Activated CD4-positive, alpha-beta memory T cell treated with anti-CD3 and anti-CD28 coated beads for 36 hours (primary cell): ENCODE measurements at regions of chr6 and their contacts with region 1.

Region 1: GRCh38 chr6:53464921-53465460 is 79.9 kb downstream of the GCLC start:
- DNase-seq: no peak
- H3K4me3 Mint-ChIP-seq: no peak overlapping the region
- H3K27ac Mint-ChIP-seq: no peak overlapping the region
- H3K4me1 Mint-ChIP-seq: no peaks in the 10 kb centered on the region
- H3K27me3 Mint-ChIP-seq: no peaks in the 10 kb centered on the region

Region 2: DNA sequence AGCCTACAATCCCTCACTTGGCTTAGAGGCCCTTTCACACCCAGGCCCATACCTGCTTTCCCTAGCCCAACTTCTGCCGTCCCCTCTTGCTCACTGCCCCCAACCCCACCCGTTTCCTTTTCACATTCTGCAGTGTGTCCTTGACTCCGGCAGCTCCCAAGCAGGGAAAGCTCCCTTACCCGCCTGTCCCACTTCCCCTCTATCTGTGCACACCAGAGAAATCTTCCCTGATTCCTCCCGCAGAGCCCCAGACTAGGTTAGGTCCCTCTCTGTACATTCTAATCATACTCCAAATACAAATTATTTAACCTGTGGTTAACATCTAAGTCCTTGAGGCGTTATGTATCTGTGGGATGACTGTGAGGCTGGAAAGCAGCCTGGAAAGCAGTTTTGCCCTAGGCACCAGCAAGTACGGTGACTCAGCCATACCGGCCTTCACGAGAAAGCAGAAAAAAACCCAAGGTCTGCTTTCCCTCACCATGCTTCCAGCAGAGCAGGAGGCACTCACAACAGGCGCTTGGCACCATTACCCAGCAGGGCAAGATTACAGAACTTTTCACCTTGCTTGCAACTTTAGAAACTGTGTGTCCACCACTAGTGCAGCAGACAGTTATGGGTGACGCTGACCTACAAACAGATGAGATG is 138.5 kb before region 1 on chr6:
- CTCF ChIA-PET with region 1: no interaction called
- POLR2A ChIA-PET with region 1: no interaction called
- intact Hi-C with region 1: no loop called
- DNase-seq: peak; percentile 56
- H3K4me3 Mint-ChIP-seq: no peak overlapping the region
- H3K27ac Mint-ChIP-seq: peak overlapping the region; percentile 76
- H3K4me1 Mint-ChIP-seq: peaks cover 76% of the 10 kb centered on the region
- H3K27me3 Mint-ChIP-seq: no peaks in the 10 kb centered on the region

Region 3: GRCh38 chr6:53391170-53391569 is 73.8 kb before region 1 on chr6:
- CTCF ChIA-PET with region 1: no interaction called
- POLR2A ChIA-PET with region 1: no interaction called
- intact Hi-C with region 1: no loop called
- DNase-seq: no peak
- H3K4me3 Mint-ChIP-seq: no peak overlapping the region
- H3K27ac Mint-ChIP-seq: no peak overlapping the region
- H3K4me1 Mint-ChIP-seq: no peaks in the 10 kb centered on the region
- H3K27me3 Mint-ChIP-seq: no peaks in the 10 kb centered on the region

Region 4: GRCh38 chr6:53447869-53448268 is 17.1 kb before region 1 on chr6:
- CTCF ChIA-PET with region 1: no interaction called
- POLR2A ChIA-PET with region 1: no interaction called
- intact Hi-C with region 1: loop called (anchors 2 kb)
- DNase-seq: no peak
- H3K4me3 Mint-ChIP-seq: no peak overlapping the region
- H3K27ac Mint-ChIP-seq: no peak overlapping the region
- H3K4me1 Mint-ChIP-seq: no peaks in the 10 kb centered on the region
- H3K27me3 Mint-ChIP-seq: peaks cover 3% of the 10 kb centered on the region

Region 5: GRCh38 chr6:53504512-53504911 is 39.5 kb after region 1 on chr6:
- CTCF ChIA-PET with region 1: no interaction called
- POLR2A ChIA-PET with region 1: no interaction called
- intact Hi-C with region 1: no loop called
- DNase-seq: no peak
- H3K4me3 Mint-ChIP-seq: no peak overlapping the region
- H3K27ac Mint-ChIP-seq: no peak overlapping the region
- H3K4me1 Mint-ChIP-seq: no peaks in the 10 kb centered on the region
- H3K27me3 Mint-ChIP-seq: no peaks in the 10 kb centered on the region